ENCODE measurements at regions of chr6 and their contacts with region 1.

Region 1: GRCh38 chr6:37018198-37019064 is 13.0 kb downstream of the FGD2 start:
- DNase-seq: peak; percentile 88
- ATAC-seq: peak; percentile 96
- H3K4me3 ChIP-seq: no peak overlapping the region
- H3K4me3 Mint-ChIP-seq: peak overlapping the region; percentile 19
- H3K27ac ChIP-seq: peak overlapping the region in 1 of 2 donors; percentile 49
- H3K27ac Mint-ChIP-seq: peak overlapping the region; percentile 76
- H3K4me1 ChIP-seq: peaks cover 14 to 21% of the 10 kb centered on the region in 2 donors
- H3K4me1 Mint-ChIP-seq: peaks cover 23% of the 10 kb centered on the region
- H3K27me3 ChIP-seq: no peaks in the 10 kb centered on the region
- H3K27me3 Mint-ChIP-seq: no peaks in the 10 kb centered on the region
- CTCF ChIP-seq: peak; percentile 90

Region 2: GRCh38 chr6:36765594-36766398 is 252.6 kb before region 1 on chr6:
- CTCF ChIA-PET with region 1: interaction called, 85 read pairs
- POLR2A ChIA-PET with region 1: interaction called, 8 read pairs
- intact Hi-C with region 1: no loop called
- DNase-seq: peak; percentile 88
- ATAC-seq: peak; percentile 91
- H3K4me3 ChIP-seq: peak overlapping the region in 1 of 5 experiments; percentile 9
- H3K4me3 Mint-ChIP-seq: peak overlapping the region; percentile 60
- H3K27ac ChIP-seq: no peak overlapping the region
- H3K27ac Mint-ChIP-seq: peak overlapping the region; percentile 60
- H3K4me1 ChIP-seq: peaks cover 45 to 54% of the 10 kb centered on the region in 2 donors
- H3K4me1 Mint-ChIP-seq: peaks cover 41% of the 10 kb centered on the region
- H3K27me3 ChIP-seq: peaks cover 0 to 3% (median 0%) of the 10 kb centered on the region in 4 experiments
- H3K27me3 Mint-ChIP-seq: no peaks in the 10 kb centered on the region
- CTCF ChIP-seq: peak; percentile 92

Region 3: DNA sequence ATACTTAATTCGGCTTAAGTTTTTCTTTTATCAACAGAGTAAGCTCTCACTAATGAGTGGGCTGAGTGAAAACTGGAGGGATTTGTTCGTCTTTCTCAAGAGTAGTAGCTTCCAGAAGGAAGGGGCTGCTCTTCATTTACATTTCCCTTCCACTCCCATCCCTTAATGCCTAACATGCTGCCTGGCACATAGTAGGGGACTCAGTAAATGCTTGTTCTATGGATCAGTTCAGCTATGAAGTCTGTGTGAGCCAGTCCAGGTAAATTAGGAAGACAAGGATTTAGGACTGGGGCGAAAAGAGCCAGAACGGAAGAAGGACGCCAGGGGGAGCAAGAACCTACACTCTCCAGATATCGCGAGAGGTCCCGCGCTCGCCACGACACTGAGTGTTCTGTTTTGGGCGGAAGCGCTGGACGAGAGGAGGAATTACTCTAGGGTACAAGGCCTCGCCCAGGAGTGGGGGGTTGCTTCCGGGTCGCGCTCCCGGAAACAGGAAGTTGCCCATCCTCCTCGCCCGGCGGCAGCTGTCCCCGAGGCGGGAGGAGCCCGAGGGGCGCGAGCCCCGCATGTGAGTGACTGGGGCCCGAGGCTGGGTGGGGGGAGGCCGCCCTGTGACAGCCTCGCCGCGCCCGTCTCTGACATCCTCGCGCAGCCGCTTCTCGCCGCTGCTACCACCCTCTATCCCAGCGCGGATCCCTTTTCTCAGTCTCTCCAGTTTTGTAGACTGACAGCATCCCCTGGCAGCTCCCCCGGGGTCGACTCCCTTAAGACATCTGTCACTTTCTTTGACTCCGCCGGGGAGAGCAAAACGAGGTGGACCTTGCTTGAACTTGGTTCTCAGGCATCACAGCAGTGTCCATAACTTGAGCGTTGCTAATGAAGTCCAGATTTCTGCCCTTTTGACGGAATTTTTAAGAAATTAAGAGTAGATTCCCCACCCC is 132.7 kb before region 1 on chr6 and contains the start of gene C6orf89:
- CTCF ChIA-PET with region 1: interaction called, 82 read pairs
- POLR2A ChIA-PET with region 1: interaction called, 3 read pairs
- intact Hi-C with region 1: loop called (anchors 1 kb)
- DNase-seq: peak; percentile 98
- ATAC-seq: peak; percentile 99
- H3K4me3 ChIP-seq: peak within 1 kb of the TSS; percentile 68 to 89 (median 80)
- H3K4me3 Mint-ChIP-seq: peak within 1 kb of the TSS; percentile 90
- H3K27ac ChIP-seq: peak within 1 kb of the TSS; percentile 82 to 92
- H3K27ac Mint-ChIP-seq: peak within 1 kb of the TSS; percentile 92
- H3K4me1 ChIP-seq: peaks cover 17 to 22% of the 10 kb centered on the region in 2 donors
- H3K4me1 Mint-ChIP-seq: peaks cover 32% of the 10 kb centered on the region
- H3K27me3 ChIP-seq: no peaks in the 10 kb centered on the region
- H3K27me3 Mint-ChIP-seq: no peaks in the 10 kb centered on the region
- CTCF ChIP-seq: peak; percentile 86
- total RNA-seq, gene C6orf89: 34.2 and 35.3 TPM in 2 replicates

Region 4: DNA sequence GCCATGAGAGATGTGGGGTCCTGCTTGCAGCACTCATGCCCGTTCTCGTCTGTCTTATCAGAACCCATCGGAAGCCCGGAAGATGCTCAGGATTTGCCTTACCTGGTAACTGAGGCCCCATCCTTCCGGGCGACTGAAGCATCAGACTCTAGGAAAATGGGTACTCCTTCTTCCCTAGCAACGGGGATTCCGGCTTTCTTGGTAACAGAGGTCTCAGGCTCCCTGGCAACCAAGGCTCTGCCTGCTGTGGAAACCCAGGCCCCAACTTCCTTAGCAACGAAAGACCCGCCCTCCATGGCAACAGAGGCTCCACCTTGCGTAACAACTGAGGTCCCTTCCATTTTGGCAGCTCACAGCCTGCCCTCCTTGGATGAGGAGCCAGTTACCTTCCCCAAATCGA is 55.6 kb before region 1 on chr6:
- CTCF ChIA-PET with region 1: interaction called, 14 read pairs
- POLR2A ChIA-PET with region 1: no interaction called
- intact Hi-C with region 1: no loop called
- DNase-seq: peak; percentile 89
- ATAC-seq: peak; percentile 75
- H3K4me3 ChIP-seq: peak overlapping the region in 4 of 5 experiments; percentile 10 to 25 (median 20)
- H3K4me3 Mint-ChIP-seq: peak overlapping the region; percentile 75
- H3K27ac ChIP-seq: peak overlapping the region; percentile 58 to 61
- H3K27ac Mint-ChIP-seq: peak overlapping the region; percentile 92
- H3K4me1 ChIP-seq: peaks cover 22 to 30% of the 10 kb centered on the region in 2 donors
- H3K4me1 Mint-ChIP-seq: peaks cover 35% of the 10 kb centered on the region
- H3K27me3 ChIP-seq: no peaks in the 10 kb centered on the region
- H3K27me3 Mint-ChIP-seq: no peaks in the 10 kb centered on the region
- CTCF ChIP-seq: no peak

Region 5: GRCh38 chr6:37005061-37005810 is 13.2 kb before region 1 on chr6 and contains the start of gene FGD2:
- CTCF ChIA-PET with region 1: interaction called, 113 read pairs
- POLR2A ChIA-PET with region 1: interaction called, 20 read pairs
- intact Hi-C with region 1: loop called (anchors 1 kb)
- DNase-seq: peak; percentile 89
- ATAC-seq: peak; percentile 72
- H3K4me3 ChIP-seq: peak within 1 kb of the TSS; percentile 82 to 97 (median 89)
- H3K4me3 Mint-ChIP-seq: peak within 1 kb of the TSS; percentile 96
- H3K27ac ChIP-seq: peak within 1 kb of the TSS; percentile 80 to 92
- H3K27ac Mint-ChIP-seq: peak within 1 kb of the TSS; percentile 95
- H3K4me1 ChIP-seq: peaks cover 56 to 79% of the 10 kb centered on the region in 2 donors
- H3K4me1 Mint-ChIP-seq: peaks cover 82% of the 10 kb centered on the region
- H3K27me3 ChIP-seq: no peaks in the 10 kb centered on the region
- H3K27me3 Mint-ChIP-seq: no peaks in the 10 kb centered on the region
- CTCF ChIP-seq: no peak
- total RNA-seq, gene FGD2: 352 and 360 TPM in 2 replicates

Region 6: GRCh38 chr6:37115236-37115895 is 96.9 kb after region 1 on chr6:
- CTCF ChIA-PET with region 1: no interaction called
- POLR2A ChIA-PET with region 1: no interaction called
- intact Hi-C with region 1: no loop called
- DNase-seq: no peak
- ATAC-seq: no peak
- H3K4me3 ChIP-seq: no peak overlapping the region
- H3K4me3 Mint-ChIP-seq: no peak overlapping the region
- H3K27ac ChIP-seq: no peak overlapping the region
- H3K27ac Mint-ChIP-seq: peak overlapping the region; percentile 2
- H3K4me1 ChIP-seq: no peaks in the 10 kb centered on the region
- H3K4me1 Mint-ChIP-seq: peaks cover 4% of the 10 kb centered on the region
- H3K27me3 ChIP-seq: no peaks in the 10 kb centered on the region
- H3K27me3 Mint-ChIP-seq: no peaks in the 10 kb centered on the region
- CTCF ChIP-seq: no peak

Region 7: GRCh38 chr6:37182736-37183590 is 164.5 kb after region 1 on chr6:
- CTCF ChIA-PET with region 1: interaction called, 510 read pairs
- POLR2A ChIA-PET with region 1: no interaction called
- intact Hi-C with region 1: no loop called
- DNase-seq: peak; percentile 68
- ATAC-seq: peak; percentile 98
- H3K4me3 ChIP-seq: no peak overlapping the region
- H3K4me3 Mint-ChIP-seq: no peak overlapping the region
- H3K27ac ChIP-seq: peak overlapping the region in 1 of 2 donors; percentile 12
- H3K27ac Mint-ChIP-seq: peak overlapping the region; percentile 68
- H3K4me1 ChIP-seq: peaks cover 15 to 26% of the 10 kb centered on the region in 2 donors
- H3K4me1 Mint-ChIP-seq: peaks cover 25% of the 10 kb centered on the region
- H3K27me3 ChIP-seq: no peaks in the 10 kb centered on the region
- H3K27me3 Mint-ChIP-seq: no peaks in the 10 kb centered on the region
- CTCF ChIP-seq: no peak

Measured in B cell (primary cell).